Activated CD4-positive, alpha-beta memory T cell treated with anti-CD3 and anti-CD28 coated beads, Interleukin-2, amount 10 ng/mL, durations not matched to agents 7 days and 5 days (primary cell): ENCODE measurements at regions of chr18 and their contacts with region 1.

Region 1: DNA sequence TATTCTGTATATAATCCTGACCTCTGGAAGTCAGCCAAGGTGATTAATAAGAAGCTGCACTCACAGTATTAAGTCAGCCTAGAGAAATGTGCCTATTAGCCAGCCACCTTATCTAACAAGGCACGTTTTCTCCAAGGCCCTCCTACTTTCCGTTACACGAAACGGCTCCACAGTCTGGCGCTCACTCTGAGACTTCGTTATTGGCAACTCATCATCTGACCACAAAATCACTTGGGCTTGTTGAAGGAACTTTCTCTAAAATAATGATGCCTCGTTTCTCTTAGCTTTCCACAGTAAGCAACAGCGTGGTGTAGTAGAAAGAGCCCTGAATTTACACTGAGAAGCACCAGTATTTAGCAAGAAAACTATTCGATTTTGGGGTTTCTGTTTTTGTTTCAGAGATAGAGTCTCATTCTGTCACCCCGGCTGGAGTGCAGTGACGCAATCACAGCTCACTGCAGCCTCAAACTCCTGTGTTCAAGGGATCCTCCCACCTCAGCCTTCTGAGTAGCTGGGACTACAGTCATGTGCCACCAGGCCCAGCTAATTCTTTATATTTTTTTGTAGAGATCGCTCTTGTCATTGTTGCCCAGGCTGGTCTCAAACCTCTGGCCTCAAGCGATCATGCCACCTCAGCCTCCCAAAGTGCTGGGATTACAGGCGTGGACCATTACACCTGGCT is 53.6 kb upstream of the SLC14A1 start:
- DNase-seq: peak; percentile 59
- H3K4me3 Mint-ChIP-seq: peak overlapping the region; percentile 56
- H3K27ac Mint-ChIP-seq: peak overlapping the region; percentile 72
- H3K4me1 Mint-ChIP-seq: peaks cover 58% of the 10 kb centered on the region
- H3K27me3 Mint-ChIP-seq: peaks cover 13% of the 10 kb centered on the region

Region 2: DNA sequence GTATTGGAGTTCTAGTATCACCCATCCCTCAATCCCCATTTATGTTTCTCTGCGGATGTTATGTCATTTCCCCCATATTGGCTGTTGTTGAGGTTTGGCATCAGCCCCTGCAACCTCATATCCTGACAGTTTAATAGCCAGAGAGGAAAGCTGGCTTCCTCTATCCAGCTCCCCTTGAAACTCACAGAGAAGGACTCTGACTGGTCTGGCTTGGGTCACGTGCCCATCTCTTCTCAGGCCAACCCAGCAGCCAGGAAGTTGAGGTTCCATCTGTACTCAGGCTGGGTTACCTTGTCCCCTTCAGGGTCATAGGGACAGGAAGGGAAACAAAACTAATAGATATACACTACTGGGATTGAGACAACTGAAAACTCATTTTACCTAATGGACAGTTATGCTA is 203.1 kb before region 1 on chr18:
- CTCF ChIA-PET with region 1: no interaction called
- POLR2A ChIA-PET with region 1: no interaction called
- DNase-seq: no peak
- H3K4me3 Mint-ChIP-seq: no peak overlapping the region
- H3K27ac Mint-ChIP-seq: no peak overlapping the region
- H3K4me1 Mint-ChIP-seq: no peaks in the 10 kb centered on the region
- H3K27me3 Mint-ChIP-seq: peaks cover 2% of the 10 kb centered on the region

Region 3: DNA sequence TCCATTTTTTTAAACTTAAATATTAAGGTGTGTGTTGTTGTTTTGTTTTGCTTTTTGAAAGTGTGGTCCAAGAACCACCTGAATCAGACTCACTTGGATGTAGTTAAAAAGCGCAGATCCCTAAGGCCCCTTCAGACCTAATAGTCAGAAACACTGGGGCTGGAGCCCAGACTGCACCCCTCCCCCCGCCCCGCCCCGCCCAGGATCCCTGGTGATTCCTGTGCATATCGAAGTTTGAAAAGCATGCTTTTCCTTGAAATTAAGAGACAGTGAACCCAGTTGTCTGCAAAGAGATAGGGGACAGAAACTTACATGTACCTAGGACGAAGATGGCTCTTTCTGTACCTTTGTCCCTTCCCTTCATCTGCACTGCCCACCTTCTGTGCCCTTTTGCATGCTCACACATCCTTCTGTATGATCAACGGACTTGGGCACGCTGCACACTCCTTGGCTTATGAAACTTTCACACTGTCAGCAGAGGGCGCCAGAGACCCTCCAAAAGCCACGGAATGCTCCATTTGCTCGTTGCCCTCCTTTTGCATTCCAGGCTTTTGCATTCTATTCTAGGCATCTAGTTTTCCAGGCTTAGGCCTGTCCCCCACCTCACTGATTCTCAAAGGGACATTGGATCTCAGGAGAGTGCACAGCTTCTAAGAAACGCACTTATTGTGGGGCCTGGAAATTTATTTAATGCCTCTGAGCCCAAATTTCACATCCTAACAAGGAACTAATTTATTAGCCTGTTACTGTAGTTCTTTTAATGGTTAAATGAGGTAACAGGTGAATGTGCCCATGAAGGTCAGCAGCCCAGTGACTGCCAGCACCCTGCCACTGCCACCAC is 20.8 kb after region 1 on chr18:
- CTCF ChIA-PET with region 1: interaction called, 108 read pairs
- POLR2A ChIA-PET with region 1: interaction called, 67 read pairs
- DNase-seq: peak; percentile 78
- H3K4me3 Mint-ChIP-seq: no peak overlapping the region
- H3K27ac Mint-ChIP-seq: no peak overlapping the region
- H3K4me1 Mint-ChIP-seq: peaks cover 42% of the 10 kb centered on the region
- H3K27me3 Mint-ChIP-seq: peaks cover 32% of the 10 kb centered on the region

Region 4: GRCh38 chr18:45738658-45739057 is 68.2 kb after region 1 on chr18:
- CTCF ChIA-PET with region 1: no interaction called
- POLR2A ChIA-PET with region 1: no interaction called
- DNase-seq: no peak
- H3K4me3 Mint-ChIP-seq: no peak overlapping the region
- H3K27ac Mint-ChIP-seq: no peak overlapping the region
- H3K4me1 Mint-ChIP-seq: no peaks in the 10 kb centered on the region
- H3K27me3 Mint-ChIP-seq: no peaks in the 10 kb centered on the region